PC-9 (cell line): ENCODE measurements at regions of chr15 and their contacts with region 1.

Region 1: GRCh38 chr15:69031013-69032001 is 16.8 kb downstream of the NOX5 start:
- DNase-seq: peak in 1 of 2 experiments; percentile 68
- H3K4me3 ChIP-seq: peak overlapping the region; percentile 2; the same call in 1 of the 2 replicates
- H3K27ac ChIP-seq: peak overlapping the region; percentile 36; the same call in 1 of the 2 replicates
- H3K4me1 ChIP-seq: peaks cover 26% of the 10 kb centered on the region
- H3K27me3 ChIP-seq: no peaks in the 10 kb centered on the region
- CTCF ChIP-seq: peak; percentile 44; the same call in 1 of the 2 replicates

Region 2: GRCh38 chr15:68983961-68984481 is 47.3 kb before region 1 on chr15:
- CTCF ChIA-PET with region 1: no interaction called
- POLR2A ChIA-PET with region 1: no interaction called
- intact Hi-C with region 1: no loop called
- DNase-seq: no peak
- H3K4me3 ChIP-seq: no peak overlapping the region
- H3K27ac ChIP-seq: no peak overlapping the region
- H3K4me1 ChIP-seq: no peaks in the 10 kb centered on the region
- H3K27me3 ChIP-seq: no peaks in the 10 kb centered on the region
- CTCF ChIP-seq: no peak

Region 3: GRCh38 chr15:69004011-69004410 is 27.3 kb before region 1 on chr15:
- CTCF ChIA-PET with region 1: no interaction called
- POLR2A ChIA-PET with region 1: no interaction called
- intact Hi-C with region 1: no loop called
- DNase-seq: no peak
- H3K4me3 ChIP-seq: no peak overlapping the region
- H3K27ac ChIP-seq: no peak overlapping the region
- H3K4me1 ChIP-seq: no peaks in the 10 kb centered on the region
- H3K27me3 ChIP-seq: no peaks in the 10 kb centered on the region
- CTCF ChIP-seq: no peak

Region 4: DNA sequence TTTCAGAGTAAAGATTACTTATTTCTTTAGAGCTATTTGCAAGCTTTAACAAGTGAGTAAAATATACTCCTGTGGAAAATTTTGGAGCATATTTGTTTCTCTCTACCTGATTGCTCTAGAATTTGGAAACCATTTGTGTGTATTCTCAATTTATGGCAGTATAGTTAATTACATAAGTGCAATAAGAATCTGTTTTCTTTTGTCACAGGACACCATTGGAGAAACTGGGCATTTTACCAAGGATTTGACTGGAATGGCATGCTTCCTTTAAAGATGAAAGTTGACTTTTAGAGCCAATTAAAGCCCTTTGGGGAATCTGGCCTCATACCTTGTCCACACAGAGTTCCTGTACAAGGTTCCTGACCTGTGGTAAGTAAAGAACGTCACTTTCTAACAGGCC is 305.8 kb after region 1 on chr15:
- CTCF ChIA-PET with region 1: no interaction called
- POLR2A ChIA-PET with region 1: no interaction called
- intact Hi-C with region 1: no loop called
- DNase-seq: peak in 1 of 2 experiments; percentile 41
- H3K4me3 ChIP-seq: no peak overlapping the region
- H3K27ac ChIP-seq: no peak overlapping the region
- H3K4me1 ChIP-seq: peaks cover 8% of the 10 kb centered on the region; the same call in 1 of the 2 replicates
- H3K27me3 ChIP-seq: no peaks in the 10 kb centered on the region
- CTCF ChIP-seq: no peak

Region 5: GRCh38 chr15:69462493-69463181 is 431.3 kb after region 1 on chr15:
- CTCF ChIA-PET with region 1: no interaction called
- POLR2A ChIA-PET with region 1: interaction called, 12 read pairs
- intact Hi-C with region 1: no loop called
- DNase-seq: peak; percentile 89 to 97
- H3K4me3 ChIP-seq: peak overlapping the region; percentile 61
- H3K27ac ChIP-seq: peak overlapping the region; percentile 83
- H3K4me1 ChIP-seq: peaks cover 33% of the 10 kb centered on the region
- H3K27me3 ChIP-seq: no peaks in the 10 kb centered on the region
- CTCF ChIP-seq: peak; percentile 78